ENCODE measurements at regions of chr17 and their contacts with region 1.

Region 1: GRCh38 chr17:72725433-72726068 is 366.9 kb downstream of the SLC39A11 start:
- DNase-seq: peak; percentile 65
- ATAC-seq: peak; percentile 52
- H3K4me3 Mint-ChIP-seq: no peak overlapping the region
- H3K27ac Mint-ChIP-seq: no peak overlapping the region
- H3K4me1 Mint-ChIP-seq: peaks cover 27% of the 10 kb centered on the region
- H3K27me3 Mint-ChIP-seq: no peaks in the 10 kb centered on the region
- CTCF ChIP-seq: peak; percentile 91

Region 2: DNA sequence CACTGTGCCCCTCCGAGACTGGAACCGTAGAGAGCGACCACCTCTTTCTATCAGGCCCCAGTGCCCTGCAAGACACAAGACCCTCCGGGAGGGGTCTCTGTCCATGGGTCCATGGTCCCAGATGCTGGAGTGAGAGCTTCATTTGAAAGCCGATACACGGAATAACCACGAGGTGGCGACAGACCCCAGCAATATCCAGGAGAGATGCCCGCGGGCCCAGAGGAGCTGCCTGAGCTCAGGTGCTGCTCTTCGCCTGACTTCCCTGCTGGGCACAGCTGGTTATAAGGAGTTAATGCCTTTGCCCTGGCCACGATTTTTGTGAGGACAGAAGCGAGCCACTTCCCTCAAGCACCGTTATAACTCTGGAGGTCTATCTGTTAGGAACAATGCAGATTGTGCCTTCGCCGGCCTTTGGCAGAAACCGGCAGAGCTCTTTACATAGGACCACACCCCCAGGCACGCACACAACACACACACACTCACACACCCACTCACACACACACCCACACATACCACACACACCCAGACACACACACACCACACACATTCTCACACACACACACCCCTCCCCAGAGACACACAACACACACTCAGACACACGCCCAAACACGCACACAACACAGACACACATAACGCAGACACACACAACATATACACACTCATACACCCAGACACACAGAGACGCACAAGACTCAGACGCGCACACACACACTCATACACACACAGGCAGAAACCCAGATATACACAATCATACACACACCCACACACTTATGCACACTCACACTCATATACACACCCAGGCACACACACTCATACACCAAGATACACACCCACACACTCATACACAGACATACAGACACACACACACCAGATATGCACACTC is 168.4 kb before region 1 on chr17:
- CTCF ChIA-PET with region 1: interaction called, 109 read pairs
- POLR2A ChIA-PET with region 1: interaction called, 3 read pairs
- intact Hi-C with region 1: loop called (anchors 5 kb)
- DNase-seq: peak; percentile 78
- ATAC-seq: peak; percentile 73
- H3K4me3 Mint-ChIP-seq: no peak overlapping the region
- H3K27ac Mint-ChIP-seq: no peak overlapping the region
- H3K4me1 Mint-ChIP-seq: no peaks in the 10 kb centered on the region
- H3K27me3 Mint-ChIP-seq: peaks cover 2% of the 10 kb centered on the region
- CTCF ChIP-seq: peak; percentile 72

Region 3: DNA sequence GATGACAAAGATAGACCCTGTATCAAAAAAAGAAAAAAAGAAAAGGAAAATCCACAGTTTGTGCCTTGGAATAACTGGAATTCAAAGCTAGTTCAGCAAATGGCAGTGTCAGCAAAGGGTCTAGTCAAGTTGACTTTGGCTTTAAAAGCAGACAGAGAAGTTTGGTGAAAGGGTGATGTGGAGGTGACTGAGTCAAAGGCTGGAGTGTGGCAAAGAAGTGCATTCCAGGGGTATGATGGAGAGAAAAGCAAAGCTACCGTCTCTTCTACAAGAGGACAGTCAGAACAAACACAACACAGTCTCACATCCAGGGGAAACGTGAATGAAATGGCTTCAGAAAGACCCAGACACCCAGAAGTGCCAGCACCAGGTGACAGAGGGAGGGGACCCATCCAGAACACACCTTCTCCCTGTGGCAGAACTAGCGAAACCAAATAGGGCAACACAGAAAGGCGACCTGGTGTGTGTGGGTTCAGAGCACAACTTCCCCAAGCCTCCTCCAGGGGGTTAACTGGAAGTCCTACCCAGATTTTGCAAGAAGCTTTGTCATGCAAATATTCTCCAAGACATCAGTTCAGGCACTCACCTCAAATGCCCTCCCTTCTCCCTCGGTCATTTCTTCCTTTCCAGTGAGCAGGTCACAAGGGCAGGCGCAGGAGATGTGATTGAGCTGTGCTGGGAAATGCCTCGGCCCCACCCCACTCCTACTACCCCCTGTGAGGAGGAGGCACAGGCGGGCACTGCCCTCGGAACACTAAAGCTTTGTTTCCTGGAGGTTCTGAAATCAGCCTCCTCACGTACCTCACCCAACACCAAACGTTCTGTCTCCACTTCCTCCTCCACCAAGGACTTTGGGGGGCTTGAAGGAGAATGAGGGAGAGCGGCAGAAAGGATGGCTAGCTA is 122.8 kb before region 1 on chr17:
- CTCF ChIA-PET with region 1: no interaction called
- POLR2A ChIA-PET with region 1: no interaction called
- intact Hi-C with region 1: no loop called
- DNase-seq: no peak
- ATAC-seq: peak; percentile 34
- H3K4me3 Mint-ChIP-seq: no peak overlapping the region
- H3K27ac Mint-ChIP-seq: no peak overlapping the region
- H3K4me1 Mint-ChIP-seq: no peaks in the 10 kb centered on the region
- H3K27me3 Mint-ChIP-seq: peaks cover 16% of the 10 kb centered on the region
- CTCF ChIP-seq: no peak

Region 4: DNA sequence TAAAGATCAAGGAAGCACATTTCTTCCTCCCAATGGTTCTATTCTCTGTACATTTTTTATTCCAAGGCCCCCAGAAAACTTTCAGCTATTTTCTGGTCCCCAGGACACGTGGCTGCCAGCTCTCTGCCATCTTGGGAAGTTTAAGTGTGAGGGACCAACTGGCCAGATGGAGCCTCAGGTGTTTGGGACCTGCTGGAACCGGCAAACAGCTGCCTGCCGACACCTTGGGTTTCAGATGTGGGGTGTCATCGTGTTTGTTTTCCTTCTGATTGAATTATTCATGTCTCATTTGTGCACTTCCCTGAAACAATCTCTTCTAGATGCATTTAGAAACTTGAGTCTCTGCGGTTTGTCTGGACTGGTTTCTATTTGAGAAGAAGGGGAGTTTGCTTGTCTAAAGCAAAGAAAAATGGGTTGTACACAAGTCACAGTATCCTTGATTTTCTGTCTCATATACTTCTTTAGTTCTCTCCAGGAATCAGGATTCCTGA is 19.6 kb before region 1 on chr17:
- CTCF ChIA-PET with region 1: interaction called, 11 read pairs
- POLR2A ChIA-PET with region 1: no interaction called
- intact Hi-C with region 1: no loop called
- DNase-seq: no peak
- ATAC-seq: no peak
- H3K4me3 Mint-ChIP-seq: no peak overlapping the region
- H3K27ac Mint-ChIP-seq: no peak overlapping the region
- H3K4me1 Mint-ChIP-seq: peaks cover 19% of the 10 kb centered on the region
- H3K27me3 Mint-ChIP-seq: no peaks in the 10 kb centered on the region
- CTCF ChIP-seq: no peak

Region 5: DNA sequence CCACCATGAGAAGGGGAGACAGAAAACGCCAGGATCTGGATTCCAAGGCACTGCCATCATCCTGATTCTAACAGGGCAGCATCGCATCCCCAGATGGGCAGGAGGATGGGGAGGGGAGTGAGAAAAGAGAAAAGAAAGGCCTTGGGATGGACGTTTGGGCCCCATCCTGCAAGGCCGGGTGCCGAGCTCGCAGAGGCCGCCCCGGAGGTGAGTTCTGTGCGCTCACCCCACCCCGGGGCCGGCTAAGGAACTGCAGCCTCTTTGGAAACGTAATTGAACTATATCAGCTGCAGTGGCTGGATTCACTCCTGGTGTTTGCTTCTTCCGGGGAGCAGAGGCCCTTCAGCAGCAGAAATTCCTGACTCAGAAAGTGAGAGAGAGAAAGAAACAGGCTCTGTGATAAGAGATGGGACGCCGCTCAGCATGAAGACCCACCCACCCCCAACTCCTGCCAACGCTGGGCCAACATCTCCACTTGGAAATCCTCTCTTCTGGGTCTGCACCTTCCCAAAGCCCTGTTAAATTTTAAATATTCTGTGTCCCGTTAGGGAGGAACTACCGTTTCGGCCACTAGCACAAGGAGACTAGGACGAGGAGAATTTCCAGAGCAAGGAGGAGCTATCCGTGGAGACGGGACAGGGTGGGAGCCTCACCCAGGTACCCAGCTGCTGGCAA is 430.8 kb after region 1 on chr17:
- CTCF ChIA-PET with region 1: interaction called, 97 read pairs
- POLR2A ChIA-PET with region 1: no interaction called
- intact Hi-C with region 1: loop called (anchors 5 kb)
- DNase-seq: peak; percentile 75
- ATAC-seq: peak; percentile 94
- H3K4me3 Mint-ChIP-seq: no peak overlapping the region
- H3K27ac Mint-ChIP-seq: no peak overlapping the region
- H3K4me1 Mint-ChIP-seq: peaks cover 8% of the 10 kb centered on the region
- H3K27me3 Mint-ChIP-seq: peaks cover 11% of the 10 kb centered on the region
- CTCF ChIP-seq: peak; percentile 77

Region 6: DNA sequence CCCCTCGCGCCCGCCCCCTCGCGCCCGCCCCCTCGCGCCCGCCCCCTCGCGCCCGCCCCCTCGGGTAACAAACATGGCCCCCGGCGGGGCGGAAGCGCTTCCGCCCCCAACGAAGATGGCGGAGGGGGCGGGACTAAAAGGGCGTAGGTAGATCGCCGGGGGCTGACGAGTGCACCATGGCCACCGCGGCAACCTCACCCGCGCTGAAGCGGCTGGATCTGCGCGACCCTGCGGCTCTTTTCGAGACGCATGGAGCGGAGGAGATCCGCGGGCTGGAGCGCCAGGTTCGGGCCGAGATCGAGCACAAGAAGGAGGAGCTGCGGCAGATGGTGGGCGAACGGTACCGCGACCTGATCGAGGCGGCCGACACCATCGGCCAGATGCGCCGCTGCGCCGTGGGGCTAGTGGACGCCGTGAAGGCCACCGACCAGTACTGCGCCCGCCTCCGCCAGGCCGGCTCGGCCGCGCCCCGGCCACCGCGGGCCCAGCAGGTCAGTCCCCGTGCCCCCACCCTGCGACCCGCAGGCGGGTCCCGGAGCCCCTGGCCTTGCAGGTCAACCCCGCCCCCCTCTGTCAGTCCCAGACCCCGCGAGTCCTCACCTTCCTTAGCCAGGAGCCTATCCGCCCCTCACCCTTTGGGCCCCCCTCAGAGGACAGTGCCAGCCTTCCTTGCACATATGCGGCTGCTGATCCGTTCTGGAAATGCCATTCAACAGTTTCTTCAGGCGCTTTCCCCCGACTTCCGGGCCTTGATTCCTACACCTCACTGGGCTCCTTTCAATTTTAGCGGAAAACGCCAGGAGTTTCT is 467.5 kb after region 1 on chr17 and contains the start of gene COG1:
- CTCF ChIA-PET with region 1: interaction called, 47 read pairs
- POLR2A ChIA-PET with region 1: interaction called, 8 read pairs
- intact Hi-C with region 1: no loop called
- DNase-seq: peak; percentile 87
- ATAC-seq: peak; percentile 81
- H3K4me3 Mint-ChIP-seq: peak within 1 kb of the TSS; percentile 95
- H3K27ac Mint-ChIP-seq: peak within 1 kb of the TSS; percentile 99
- H3K4me1 Mint-ChIP-seq: peaks cover 22% of the 10 kb centered on the region
- H3K27me3 Mint-ChIP-seq: no peaks in the 10 kb centered on the region
- CTCF ChIP-seq: no peak
- total RNA-seq, gene COG1: 24.6 to 27.9 TPM

Region 7: DNA sequence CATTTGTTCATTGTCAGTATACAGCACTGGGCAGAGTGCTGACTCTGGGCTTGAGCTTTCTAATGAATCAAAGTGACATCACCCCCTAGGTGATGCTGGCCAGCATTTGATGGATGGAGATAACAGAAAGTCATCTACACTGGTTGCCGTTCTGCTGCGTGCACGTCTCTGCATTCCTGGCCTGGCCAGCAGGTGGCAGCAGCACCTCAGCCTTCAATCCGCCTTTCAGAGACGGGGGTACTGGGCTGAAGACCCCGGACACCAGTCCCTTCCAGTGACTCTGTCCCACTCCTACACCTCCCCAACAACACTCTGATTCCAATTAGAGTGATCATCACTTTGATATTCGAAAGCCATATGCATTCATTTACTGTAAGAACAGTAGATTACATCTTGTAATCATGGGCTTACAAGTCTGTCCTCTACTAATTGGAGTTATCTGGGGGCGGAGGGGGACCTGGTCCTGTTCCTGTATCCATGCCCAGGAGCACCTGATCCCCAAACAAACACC is 530.2 kb after region 1 on chr17:
- CTCF ChIA-PET with region 1: interaction called, 11 read pairs
- POLR2A ChIA-PET with region 1: no interaction called
- intact Hi-C with region 1: no loop called
- DNase-seq: peak; percentile 73
- ATAC-seq: peak; percentile 87
- H3K4me3 Mint-ChIP-seq: no peak overlapping the region
- H3K27ac Mint-ChIP-seq: no peak overlapping the region
- H3K4me1 Mint-ChIP-seq: peaks cover 4% of the 10 kb centered on the region
- H3K27me3 Mint-ChIP-seq: no peaks in the 10 kb centered on the region
- CTCF ChIP-seq: peak; percentile 99